ENCODE measurements at regions of chr11 and their contacts with region 1.

Region 1: DNA sequence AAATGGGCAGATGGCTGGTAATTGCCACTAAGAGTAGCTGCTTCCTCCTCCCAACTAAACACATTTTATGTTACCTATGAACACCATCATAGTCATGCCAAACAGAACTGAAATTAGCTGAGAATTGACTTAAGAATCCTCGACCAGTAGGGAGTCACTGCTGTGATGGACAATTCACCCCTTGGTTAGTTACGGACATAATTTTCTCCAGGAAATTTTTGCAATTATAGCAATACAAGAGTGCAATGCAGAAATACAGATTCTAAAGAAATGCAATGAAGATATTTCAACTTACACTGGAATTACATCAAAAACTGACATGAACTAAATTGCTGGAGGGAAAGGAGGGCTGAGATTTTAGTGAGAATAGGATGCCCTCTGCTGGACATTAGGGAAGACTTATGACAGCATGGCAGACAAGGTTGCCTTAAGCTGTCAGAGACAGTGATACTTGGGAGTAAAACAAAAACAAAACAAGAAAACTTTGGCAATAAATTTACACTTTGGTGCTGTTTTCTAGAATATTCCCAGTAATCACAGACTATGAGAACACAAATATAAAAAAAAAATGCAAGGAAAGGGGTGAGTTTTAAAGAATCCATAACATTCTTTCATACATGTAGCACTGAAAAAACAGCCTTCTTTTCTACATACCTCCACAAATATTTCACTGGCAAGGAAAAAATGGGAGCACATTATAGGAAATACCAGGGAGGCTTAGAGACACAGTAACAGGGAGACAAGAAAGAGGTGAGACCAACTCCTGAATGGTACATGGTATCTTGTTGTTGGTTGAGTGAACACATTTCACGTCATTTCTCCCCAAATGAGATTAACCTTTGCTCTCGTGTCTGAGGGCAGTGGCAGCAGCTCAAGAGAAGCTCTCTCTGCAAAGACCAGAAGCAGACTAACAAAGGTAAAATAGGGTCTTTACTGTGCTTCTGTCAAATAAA is 11.2 kb upstream of the PPP2R1B start:
- DNase-seq: peak in 2 of 4 donors; percentile 74 to 86
- ATAC-seq: peak; percentile 94
- H3K4me3 ChIP-seq: no peak overlapping the region
- H3K27ac ChIP-seq: no peak overlapping the region
- H3K4me1 ChIP-seq: no peaks in the 10 kb centered on the region
- H3K27me3 ChIP-seq: no peaks in the 10 kb centered on the region
- CTCF ChIP-seq: peak; percentile 54 to 80

Region 2: DNA sequence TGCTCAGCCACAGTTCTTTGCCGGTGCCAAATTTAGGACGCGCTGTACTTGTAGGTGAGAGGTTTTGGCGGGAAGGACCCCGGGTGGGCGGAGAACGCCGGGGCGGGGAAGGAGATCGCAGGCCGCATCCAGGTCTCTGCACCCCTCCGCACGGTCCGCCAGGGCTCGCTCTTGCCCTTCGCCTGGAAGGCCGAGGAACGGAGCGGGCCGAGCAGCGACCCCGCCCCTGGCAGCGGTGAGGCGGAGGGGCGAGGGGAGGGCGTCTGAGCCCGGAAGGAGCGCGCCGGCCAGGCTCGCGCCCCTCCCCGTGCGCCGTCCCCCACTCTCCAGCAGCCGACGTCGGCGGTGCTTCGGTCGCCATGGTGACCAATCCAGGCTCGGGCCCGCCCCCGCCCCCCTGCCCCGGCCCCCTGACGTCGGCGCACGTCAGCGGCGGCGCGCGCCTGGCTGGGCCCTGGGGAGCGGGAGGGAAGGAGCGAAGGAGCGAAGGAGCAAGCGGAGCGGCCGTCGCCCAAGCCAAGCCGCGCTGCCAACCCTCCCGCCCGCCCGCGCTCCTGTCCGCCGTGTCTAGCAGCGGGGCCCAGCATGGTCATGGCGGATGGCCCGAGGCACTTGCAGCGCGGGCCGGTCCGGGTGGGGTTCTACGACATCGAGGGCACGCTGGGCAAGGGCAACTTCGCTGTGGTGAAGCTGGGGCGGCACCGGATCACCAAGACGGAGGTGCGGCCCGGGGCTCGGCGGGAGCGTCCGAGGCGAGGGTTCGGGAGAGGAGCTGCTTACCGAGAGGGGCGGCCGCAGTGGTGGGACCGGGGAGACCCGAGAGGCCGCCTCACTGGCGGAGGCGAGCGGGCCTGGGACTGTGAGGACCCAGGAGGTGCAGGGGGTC is 175.1 kb before region 1 on chr11 and contains the start of gene SIK2:
- intact Hi-C with region 1: loop called in 1 of 2 experiments (anchors 5 kb)
- DNase-seq: peak; percentile 95 to 99 (median 96)
- ATAC-seq: peak; percentile 94
- H3K4me3 ChIP-seq: peak within 1 kb of the TSS; percentile 88 to 93
- H3K27ac ChIP-seq: peak within 1 kb of the TSS; percentile 95 to 97
- H3K4me1 ChIP-seq: peaks cover 0 to 50% of the 10 kb centered on the region in 2 donors
- H3K27me3 ChIP-seq: no peaks in the 10 kb centered on the region
- CTCF ChIP-seq: peak; percentile 80 to 82
- polyA plus RNA-seq, gene SIK2: 28.3 to 35.1 (median 31.1) TPM

Region 3: GRCh38 chr11:111841370-111842053 is 64.1 kb after region 1 on chr11:
- intact Hi-C with region 1: loop called in 1 of 2 experiments (anchors 10 kb)
- DNase-seq: peak in 3 of 4 donors; percentile 79 to 87 (median 87)
- ATAC-seq: peak; percentile 96
- H3K4me3 ChIP-seq: no peak overlapping the region
- H3K27ac ChIP-seq: peak overlapping the region; percentile 21 to 53
- H3K4me1 ChIP-seq: peaks cover 0 to 47% of the 10 kb centered on the region in 2 donors
- H3K27me3 ChIP-seq: no peaks in the 10 kb centered on the region
- CTCF ChIP-seq: peak; percentile 84 to 89